ENCODE measurements at regions of chr17 and their contacts with region 1.

Region 1: DNA sequence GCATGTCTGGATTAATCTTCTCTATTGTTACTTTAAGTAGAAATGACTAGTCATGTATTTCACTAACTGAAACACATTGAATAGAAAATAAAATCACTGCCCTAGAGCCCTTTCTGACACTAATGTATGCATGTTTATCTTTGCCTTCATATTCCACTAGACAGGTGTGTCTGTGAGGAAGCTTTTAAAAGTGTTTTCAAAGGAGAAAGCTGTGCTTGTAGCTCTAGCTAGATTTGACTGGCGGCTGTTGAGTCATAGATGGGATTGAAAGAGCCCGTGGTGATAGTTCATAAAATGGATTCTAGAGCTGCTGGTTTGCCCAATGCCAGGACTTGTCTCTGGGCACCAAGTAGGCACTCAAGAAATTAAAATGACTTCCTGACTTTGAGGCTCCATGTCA is 189.0 kb upstream of the PIRT start:
- DNase-seq: no peak
- H3K4me3 ChIP-seq: no peak overlapping the region
- CTCF ChIP-seq: no peak

Region 2: DNA sequence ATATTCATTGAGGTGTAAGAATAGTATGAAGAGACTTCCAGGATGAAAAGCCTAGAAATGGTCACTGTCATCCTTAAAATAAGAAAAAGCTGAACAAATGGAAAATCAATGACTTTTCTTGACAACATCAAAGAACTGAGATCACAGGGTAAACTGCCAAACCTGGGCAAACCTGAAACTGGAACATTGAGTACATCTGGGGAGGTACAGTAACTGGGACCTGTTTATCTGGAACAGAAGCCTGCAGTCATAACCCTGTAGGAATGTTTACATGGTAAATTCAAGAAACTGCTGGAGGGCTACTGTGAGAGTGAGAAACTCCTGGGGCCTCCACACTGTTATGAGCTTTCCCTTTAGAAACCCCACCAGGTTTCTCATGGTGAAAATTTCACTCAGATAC is 58.9 kb before region 1 on chr17:
- in situ Hi-C with region 1: no loop called
- DNase-seq: no peak
- H3K4me3 ChIP-seq: no peak overlapping the region
- CTCF ChIP-seq: no peak

Region 3: GRCh38 chr17:10987786-10988185 is 39.1 kb before region 1 on chr17:
- in situ Hi-C with region 1: loop called (anchors 5 kb)
- DNase-seq: no peak
- H3K4me3 ChIP-seq: no peak overlapping the region
- CTCF ChIP-seq: no peak

Measured in astrocyte of the cerebellum (primary cell).